Ascending aorta (tissue), 2 donors: ENCODE measurements at regions of chr6 and their contacts with region 1.

Region 1: GRCh38 chr6:68778356-68779020 is 143.4 kb downstream of the ADGRB3 start:
- DNase-seq: no peak
- H3K4me3 ChIP-seq: no peak overlapping the region
- H3K27ac ChIP-seq: no peak overlapping the region
- H3K4me1 ChIP-seq: no peaks in the 10 kb centered on the region
- H3K27me3 ChIP-seq: no peaks in the 10 kb centered on the region
- CTCF ChIP-seq: peak; percentile 50 to 75 (median 68)

Region 2: DNA sequence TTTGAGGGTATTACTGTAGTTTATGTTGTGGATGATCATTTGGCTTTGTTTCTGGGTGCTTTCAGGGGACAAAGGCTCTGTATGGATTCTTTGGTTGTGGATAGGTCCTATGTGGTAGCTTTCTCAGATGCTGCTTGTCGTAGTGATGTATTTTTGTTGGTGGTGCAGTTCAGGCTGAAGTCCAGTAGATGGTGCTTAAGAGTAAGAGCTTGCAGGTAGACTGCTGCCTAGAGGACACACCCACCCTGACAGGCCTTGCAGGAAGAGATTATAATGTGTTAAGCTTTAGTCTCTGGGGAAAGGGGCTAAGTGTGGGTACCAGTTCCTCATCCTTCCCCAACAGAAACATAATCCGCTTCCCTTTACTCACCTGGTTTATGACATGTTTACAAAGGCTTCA is 206.0 kb before region 1 on chr6:
- intact Hi-C with region 1: loop called (anchors 5 kb)
- DNase-seq: no peak
- H3K4me3 ChIP-seq: no peak overlapping the region
- H3K27ac ChIP-seq: no peak overlapping the region
- H3K4me1 ChIP-seq: no peaks in the 10 kb centered on the region
- H3K27me3 ChIP-seq: no peaks in the 10 kb centered on the region
- CTCF ChIP-seq: peak in 2 of 3 experiments; percentile 17 to 30

Region 3: DNA sequence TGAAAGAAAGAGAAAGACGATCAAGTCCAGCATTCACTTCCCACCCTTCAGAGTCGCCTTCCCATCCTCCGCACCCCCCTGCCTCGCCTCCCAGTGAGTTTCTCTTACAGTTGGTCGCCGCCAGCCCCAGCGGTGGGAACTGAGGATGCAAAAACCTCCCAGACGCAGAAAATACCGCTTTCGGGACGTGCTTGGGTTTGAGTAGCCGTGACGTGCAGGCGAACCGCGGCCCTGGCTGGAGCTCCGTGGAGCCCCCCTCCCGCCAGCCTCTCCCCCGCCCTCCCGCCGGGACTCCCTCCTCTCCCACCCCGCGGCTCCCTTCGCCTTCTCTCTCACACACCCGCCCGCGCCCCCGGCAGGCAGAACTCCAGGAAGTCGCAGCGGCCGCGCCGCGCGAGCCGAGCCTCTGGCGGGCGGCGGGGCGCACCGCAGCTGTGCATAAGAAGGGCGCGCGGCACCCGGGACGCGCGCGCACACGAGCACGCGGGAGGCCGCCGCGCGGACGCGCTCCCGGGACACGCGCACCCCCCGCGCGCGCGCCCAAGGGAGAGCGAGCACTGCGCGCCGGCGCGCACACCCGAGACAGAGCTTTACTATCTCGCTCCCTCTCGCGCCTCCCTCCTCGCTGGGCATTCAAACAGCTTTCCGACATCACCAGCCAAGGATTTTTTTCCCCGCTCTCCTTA is 143.6 kb before region 1 on chr6 and contains the start of gene ADGRB3:
- intact Hi-C with region 1: loop called (anchors 1 kb)
- DNase-seq: peak; percentile 37 to 92
- H3K4me3 ChIP-seq: peak within 1 kb of the TSS; percentile 82 to 94
- H3K27ac ChIP-seq: peak within 1 kb of the TSS; percentile 82 to 87
- H3K4me1 ChIP-seq: no peaks in the 10 kb centered on the region
- H3K27me3 ChIP-seq: no peaks in the 10 kb centered on the region
- CTCF ChIP-seq: peak in 2 of 3 experiments; percentile 24 to 42
- total RNA-seq, gene ADGRB3: 4.4 TPM

Region 4: GRCh38 chr6:68738039-68738438 is 40.4 kb before region 1 on chr6:
- intact Hi-C with region 1: loop called (anchors 5 kb)
- DNase-seq: no peak
- H3K4me3 ChIP-seq: no peak overlapping the region
- H3K27ac ChIP-seq: no peak overlapping the region
- H3K4me1 ChIP-seq: peaks cover 0 to 5% of the 10 kb centered on the region in 2 donors
- H3K27me3 ChIP-seq: no peaks in the 10 kb centered on the region
- CTCF ChIP-seq: no peak